ENCODE measurements at regions of chr1 and their contacts with region 1.

Region 1: DNA sequence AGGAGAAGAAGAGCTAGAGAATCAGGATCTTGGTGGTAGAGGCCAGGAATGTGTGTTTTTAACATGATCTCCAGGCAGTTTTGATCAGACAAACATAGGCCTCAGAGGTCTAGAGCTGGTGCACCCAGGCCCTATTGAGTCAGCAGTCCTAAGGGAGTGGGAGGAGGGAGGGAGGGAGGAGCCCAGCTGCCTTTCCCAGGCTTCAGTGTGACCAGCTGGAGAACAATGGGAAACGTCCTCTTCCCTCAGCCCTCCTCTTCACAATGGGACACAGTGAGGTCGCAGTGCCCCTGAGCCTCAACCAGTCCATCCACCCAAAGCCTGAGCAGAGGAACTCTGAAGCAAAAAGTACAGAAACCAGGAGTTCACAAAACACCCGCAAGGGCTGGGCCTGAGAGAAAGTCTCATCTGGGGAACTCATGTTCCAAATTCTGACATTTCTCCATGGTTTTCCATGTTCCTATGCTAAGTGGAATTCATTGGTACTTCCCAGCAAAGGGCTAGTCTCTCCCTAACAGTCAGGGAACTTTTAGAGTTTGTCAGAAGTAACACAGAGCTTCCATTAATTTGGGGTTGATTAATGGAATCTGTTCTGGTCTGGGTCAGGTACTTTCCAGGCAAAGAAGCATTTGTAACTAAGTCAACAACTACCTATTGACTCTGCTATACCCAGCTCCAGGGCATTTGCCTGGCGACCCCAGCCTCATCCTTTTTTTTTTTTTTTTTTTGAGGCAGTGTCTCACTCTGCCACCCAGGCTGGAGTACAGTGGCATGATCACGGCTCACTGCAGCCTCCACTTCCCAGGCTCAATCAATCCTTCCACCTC is 37.5 kb downstream of the ELAPOR1 start:
- DNase-seq: peak in 1 of 2 donors; percentile 24
- ATAC-seq: no peak
- H3K4me3 ChIP-seq: no peak overlapping the region
- H3K27ac ChIP-seq: peak overlapping the region; percentile 87 to 93 (median 90)
- H3K4me1 ChIP-seq: peaks cover 20 to 24% of the 10 kb centered on the region in 2 donors
- H3K27me3 ChIP-seq: no peaks in the 10 kb centered on the region
- CTCF ChIP-seq: no peak
- POLR2A ChIP-seq: no peak

Region 2: DNA sequence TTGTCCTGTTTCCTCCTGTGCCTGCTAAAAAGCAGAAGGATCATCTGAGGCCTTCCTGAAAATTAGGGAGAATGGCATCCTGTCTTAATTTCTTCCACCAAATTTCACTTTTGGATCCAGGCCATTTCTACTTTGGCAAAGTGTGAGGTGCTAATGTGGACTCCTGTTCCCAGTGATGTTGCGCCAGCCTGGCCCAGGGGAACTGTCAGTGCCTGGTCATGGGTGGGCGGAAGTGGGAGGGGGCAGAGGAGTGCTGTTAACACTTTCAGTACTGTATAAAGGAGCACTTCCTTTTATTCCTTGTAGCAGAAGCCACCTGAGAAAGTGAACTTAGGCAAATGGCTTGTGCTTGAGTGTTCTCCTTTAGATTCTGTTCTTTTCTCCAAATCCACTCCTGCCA is 17.6 kb before region 1 on chr1:
- in situ Hi-C with region 1: no loop called
- intact Hi-C with region 1: no loop called
- DNase-seq: peak in 1 of 2 donors; percentile 31
- ATAC-seq: peak; percentile 18 to 64
- H3K4me3 ChIP-seq: no peak overlapping the region
- H3K27ac ChIP-seq: peak overlapping the region in 3 of 4 donors; percentile 19 to 59 (median 27)
- H3K4me1 ChIP-seq: peaks cover 8 to 14% of the 10 kb centered on the region in 2 donors
- H3K27me3 ChIP-seq: no peaks in the 10 kb centered on the region
- CTCF ChIP-seq: no peak
- POLR2A ChIP-seq: no peak

Region 3: DNA sequence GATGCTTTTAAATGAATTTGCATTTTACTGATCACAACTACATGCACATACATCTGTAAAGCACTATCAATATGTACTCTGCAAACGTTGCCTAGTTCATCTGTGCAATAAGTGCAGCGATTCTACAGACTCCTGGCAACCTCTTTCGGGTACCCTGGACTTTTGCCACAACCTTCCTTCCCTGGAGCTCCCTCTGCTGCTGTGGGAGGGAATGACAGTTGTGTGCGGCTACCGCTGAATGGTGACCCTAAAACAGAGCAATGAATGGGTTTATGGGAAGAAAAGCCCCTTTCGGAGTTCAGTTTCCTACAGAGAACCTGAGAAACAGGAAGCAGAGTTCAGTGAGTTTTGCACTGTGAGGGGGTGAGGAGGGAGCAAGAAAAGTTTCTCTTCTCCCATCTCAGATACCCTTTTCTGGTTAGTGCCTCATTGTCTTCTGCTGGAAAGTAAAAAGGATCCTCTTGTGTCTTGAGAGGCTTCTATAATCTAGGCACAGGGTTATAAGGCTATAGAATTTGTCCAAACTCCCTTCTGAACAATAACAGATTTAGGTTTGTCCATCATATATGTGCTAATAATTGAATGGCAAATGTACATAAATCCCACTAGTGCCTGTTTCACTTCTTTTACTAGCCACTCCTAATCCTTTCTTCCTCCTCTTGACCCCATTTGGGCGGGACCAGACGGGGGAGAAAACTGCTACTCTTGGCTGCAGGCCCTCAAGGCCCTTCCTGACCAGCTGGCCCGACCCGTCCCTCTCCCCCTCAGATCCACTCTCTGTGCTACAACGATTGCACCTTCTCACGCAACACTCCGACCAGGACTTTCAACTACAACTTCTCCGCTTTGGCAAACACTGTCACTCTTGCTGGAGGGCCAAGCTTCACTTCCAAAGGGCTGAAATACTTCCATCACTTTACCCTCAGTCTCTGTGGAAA is 42.5 kb after region 1 on chr1:
- in situ Hi-C with region 1: no loop called
- intact Hi-C with region 1: loop called (anchors 2 kb)
- DNase-seq: no peak
- ATAC-seq: peak; percentile 51 to 62
- H3K4me3 ChIP-seq: no peak overlapping the region
- H3K27ac ChIP-seq: no peak overlapping the region
- H3K4me1 ChIP-seq: no peaks in the 10 kb centered on the region
- H3K27me3 ChIP-seq: no peaks in the 10 kb centered on the region
- CTCF ChIP-seq: peak; percentile 49 to 67 (median 61)
- POLR2A ChIP-seq: no peak

Region 4: GRCh38 chr1:109213785-109214468 is 62.5 kb after region 1 on chr1 and contains the start of gene SARS1:
- in situ Hi-C with region 1: no loop called
- intact Hi-C with region 1: loop called (anchors 2 kb)
- DNase-seq: peak; percentile 79 to 83
- ATAC-seq: peak; percentile 91 to 92
- H3K4me3 ChIP-seq: peak within 1 kb of the TSS; percentile 80 to 98 (median 87)
- H3K27ac ChIP-seq: peak within 1 kb of the TSS; percentile 89 to 97 (median 94)
- H3K4me1 ChIP-seq: peaks cover 18 to 25% of the 10 kb centered on the region in 2 donors
- H3K27me3 ChIP-seq: no peaks in the 10 kb centered on the region
- CTCF ChIP-seq: no peak
- POLR2A ChIP-seq: peak; percentile 85 to 94
- total RNA-seq, gene SARS1: 97.6 to 116 (median 98.7) TPM

Measured in gastrocnemius medialis (tissue), 4 donors.